PC-3 (cell line): ENCODE measurements at regions of chr12 and their contacts with region 1.

Region 1: GRCh38 chr12:75058228-75058627 is 151.4 kb downstream of the KCNC2 start:
- DNase-seq: peak; percentile 24
- ATAC-seq: 0 out of 2 replicates have a peak, but pooled peaks have one; percentile 33
- H3K4me3 ChIP-seq: no peak overlapping the region
- H3K27ac ChIP-seq: no peak overlapping the region
- H3K4me1 ChIP-seq: no peaks in the 10 kb centered on the region
- H3K27me3 ChIP-seq: no peaks in the 10 kb centered on the region; the same call in 1 of the 2 replicates
- CTCF ChIP-seq: peak; percentile 16; the same call in 1 of the 2 replicates

Region 2: DNA sequence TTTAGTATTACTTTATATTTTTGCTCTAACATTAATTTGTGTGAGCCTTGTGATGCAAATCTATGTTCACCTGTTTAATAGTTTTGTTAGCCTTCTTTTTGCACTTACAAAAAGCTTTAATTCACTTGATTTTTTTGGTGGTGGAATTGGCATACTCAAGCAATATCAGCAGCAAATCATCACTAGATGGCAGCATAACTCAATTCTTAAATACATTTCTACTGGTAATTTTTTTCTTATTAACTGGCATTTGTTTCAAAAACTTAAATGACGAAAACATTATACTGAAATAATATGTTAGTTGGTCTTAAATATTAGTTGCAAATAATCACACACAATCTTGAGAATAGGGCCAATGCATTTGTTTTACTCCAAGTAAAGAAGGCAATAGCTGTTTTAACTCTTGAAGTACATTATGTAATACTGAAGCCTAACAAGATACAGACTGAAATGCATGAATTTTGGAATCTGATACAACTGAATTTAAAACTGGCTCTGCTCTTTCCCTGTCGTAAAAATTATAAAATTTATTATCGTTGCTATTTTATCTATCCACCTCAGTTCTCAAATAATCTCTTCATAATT is 369.1 kb before region 1 on chr12:
- CTCF ChIA-PET with region 1: no interaction called
- POLR2A ChIA-PET with region 1: no interaction called
- intact Hi-C with region 1: loop called (anchors 1 kb)
- DNase-seq: peak; percentile 65
- ATAC-seq: 0 out of 2 replicates have a peak, but pooled peaks have one; percentile 31
- H3K4me3 ChIP-seq: no peak overlapping the region
- H3K27ac ChIP-seq: no peak overlapping the region
- H3K4me1 ChIP-seq: no peaks in the 10 kb centered on the region
- H3K27me3 ChIP-seq: no peaks in the 10 kb centered on the region
- CTCF ChIP-seq: peak; percentile 80

Region 3: GRCh38 chr12:74747305-74747704 is 310.9 kb before region 1 on chr12:
- CTCF ChIA-PET with region 1: no interaction called
- POLR2A ChIA-PET with region 1: no interaction called
- intact Hi-C with region 1: loop called (anchors 1 kb)
- DNase-seq: peak; percentile 44
- ATAC-seq: peak; percentile 33; the same call in 1 of the 2 replicates
- H3K4me3 ChIP-seq: no peak overlapping the region
- H3K27ac ChIP-seq: no peak overlapping the region
- H3K4me1 ChIP-seq: no peaks in the 10 kb centered on the region
- H3K27me3 ChIP-seq: no peaks in the 10 kb centered on the region
- CTCF ChIP-seq: peak; percentile 57

Region 4: GRCh38 chr12:74801625-74802024 is 256.6 kb before region 1 on chr12:
- CTCF ChIA-PET with region 1: interaction called, 3 read pairs
- POLR2A ChIA-PET with region 1: no interaction called
- intact Hi-C with region 1: loop called (anchors 1 kb)
- DNase-seq: no peak
- ATAC-seq: no peak
- H3K4me3 ChIP-seq: no peak overlapping the region
- H3K27ac ChIP-seq: no peak overlapping the region
- H3K4me1 ChIP-seq: no peaks in the 10 kb centered on the region
- H3K27me3 ChIP-seq: no peaks in the 10 kb centered on the region
- CTCF ChIP-seq: no peak

Region 5: DNA sequence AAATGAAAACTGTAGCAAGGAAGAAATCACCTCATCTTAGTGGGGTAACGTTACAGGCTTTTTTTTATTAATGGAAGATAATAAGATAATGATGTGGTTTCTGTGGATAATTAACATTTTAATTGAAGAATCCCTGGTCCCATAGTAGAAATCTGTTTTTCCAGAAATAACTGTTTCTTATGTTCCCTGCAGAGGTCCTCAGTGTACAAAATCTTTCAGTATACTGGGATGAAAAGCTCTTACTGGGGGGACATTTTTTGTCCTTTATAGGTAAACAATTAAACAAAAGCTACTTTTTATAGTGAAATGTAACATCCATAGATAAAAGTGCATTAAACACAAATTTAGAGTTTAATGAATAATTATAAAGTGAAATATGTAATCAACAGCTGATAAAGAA is 208.4 kb before region 1 on chr12:
- CTCF ChIA-PET with region 1: no interaction called
- POLR2A ChIA-PET with region 1: no interaction called
- intact Hi-C with region 1: loop called (anchors 1 kb)
- DNase-seq: peak; percentile 24
- ATAC-seq: peak; percentile 33; the same call in 1 of the 2 replicates
- H3K4me3 ChIP-seq: no peak overlapping the region
- H3K27ac ChIP-seq: no peak overlapping the region
- H3K4me1 ChIP-seq: no peaks in the 10 kb centered on the region
- H3K27me3 ChIP-seq: no peaks in the 10 kb centered on the region
- CTCF ChIP-seq: peak; percentile 60; the same call in 1 of the 2 replicates

Region 6: DNA sequence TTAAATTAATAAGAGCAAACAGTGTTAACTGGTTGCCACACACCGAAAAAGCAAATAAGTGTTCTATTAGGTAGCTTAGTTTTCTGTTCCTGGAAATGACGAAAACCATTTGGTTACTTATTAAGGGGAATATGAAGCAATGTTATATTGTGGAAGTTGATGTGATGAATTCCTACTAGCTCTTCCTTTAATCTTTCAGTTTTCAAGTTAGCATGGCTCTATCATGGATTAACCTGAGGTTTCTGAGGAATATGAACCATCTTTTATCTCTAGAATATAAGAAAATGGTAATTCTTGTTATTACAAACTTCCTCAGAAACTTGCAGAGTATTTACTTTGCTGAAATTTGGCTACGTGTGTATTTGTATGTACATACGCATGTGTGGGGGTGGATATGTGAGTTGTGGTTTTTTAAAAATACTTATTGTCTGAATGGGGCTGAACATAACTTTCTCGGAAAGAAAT is 94.3 kb before region 1 on chr12:
- CTCF ChIA-PET with region 1: no interaction called
- POLR2A ChIA-PET with region 1: no interaction called
- intact Hi-C with region 1: no loop called
- DNase-seq: no peak
- ATAC-seq: no peak
- H3K4me3 ChIP-seq: no peak overlapping the region
- H3K27ac ChIP-seq: no peak overlapping the region
- H3K4me1 ChIP-seq: no peaks in the 10 kb centered on the region
- H3K27me3 ChIP-seq: no peaks in the 10 kb centered on the region
- CTCF ChIP-seq: no peak

Region 7: GRCh38 chr12:75289753-75290152 is 231.5 kb after region 1 on chr12:
- CTCF ChIA-PET with region 1: no interaction called
- POLR2A ChIA-PET with region 1: no interaction called
- intact Hi-C with region 1: loop called (anchors 5 kb)
- DNase-seq: peak; percentile 59
- ATAC-seq: no peak
- H3K4me3 ChIP-seq: no peak overlapping the region
- H3K27ac ChIP-seq: no peak overlapping the region
- H3K4me1 ChIP-seq: no peaks in the 10 kb centered on the region
- H3K27me3 ChIP-seq: no peaks in the 10 kb centered on the region
- CTCF ChIP-seq: peak; percentile 78